ENCODE measurements at regions of chr3 and their contacts with region 1.

Region 1: GRCh38 chr3:101849721-101850245 is 469 bp downstream of the NFKBIZ start:
- DNase-seq: peak; percentile 88
- H3K4me3 Mint-ChIP-seq: peak overlapping the region; percentile 97
- H3K27ac Mint-ChIP-seq: peak overlapping the region; percentile 100
- H3K4me1 Mint-ChIP-seq: peaks cover 53% of the 10 kb centered on the region
- H3K27me3 Mint-ChIP-seq: no peaks in the 10 kb centered on the region

Region 2: DNA sequence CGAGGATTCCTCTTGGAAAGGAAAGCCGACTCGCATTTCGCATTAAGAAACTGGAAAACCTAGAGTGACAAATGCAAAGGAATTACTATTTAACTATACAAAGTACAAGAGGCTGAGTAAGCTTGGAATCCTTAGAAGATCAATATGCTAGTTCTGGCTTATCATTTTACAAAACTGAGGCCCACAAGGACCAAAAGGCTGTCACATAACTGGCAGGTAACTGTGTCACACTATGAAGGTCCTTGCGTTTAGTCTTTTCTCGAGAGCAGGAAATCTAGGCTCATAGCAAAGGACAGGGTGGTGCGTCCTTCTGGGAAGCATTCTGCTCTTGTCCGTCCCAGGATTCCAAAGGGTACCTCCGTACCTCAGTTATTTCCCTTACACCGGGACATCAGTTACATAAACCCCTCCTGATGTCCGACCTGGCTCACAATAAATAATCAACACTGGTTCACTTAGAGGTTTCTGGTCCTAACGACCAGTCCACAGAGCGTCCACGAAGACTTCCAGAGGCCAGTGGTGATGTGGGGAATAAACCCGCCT is 163.8 kb before region 1 on chr3:
- intact Hi-C with region 1: loop called (anchors 2 kb)
- DNase-seq: no peak
- H3K4me3 Mint-ChIP-seq: peak overlapping the region; percentile 98
- H3K27ac Mint-ChIP-seq: peak overlapping the region; percentile 98
- H3K4me1 Mint-ChIP-seq: peaks cover 24% of the 10 kb centered on the region
- H3K27me3 Mint-ChIP-seq: no peaks in the 10 kb centered on the region

Region 3: GRCh38 chr3:101803173-101803782 is 46.5 kb before region 1 on chr3:
- intact Hi-C with region 1: loop called (anchors 2 kb)
- DNase-seq: peak; percentile 90
- H3K4me3 Mint-ChIP-seq: no peak overlapping the region
- H3K27ac Mint-ChIP-seq: peak overlapping the region; percentile 26
- H3K4me1 Mint-ChIP-seq: peaks cover 16% of the 10 kb centered on the region
- H3K27me3 Mint-ChIP-seq: no peaks in the 10 kb centered on the region

Region 4: GRCh38 chr3:101861212-101861788 is 11.5 kb after region 1 on chr3:
- intact Hi-C with region 1: loop called (anchors 1 kb)
- DNase-seq: peak; percentile 25
- H3K4me3 Mint-ChIP-seq: no peak overlapping the region
- H3K27ac Mint-ChIP-seq: peak overlapping the region; percentile 59
- H3K4me1 Mint-ChIP-seq: peaks cover 30% of the 10 kb centered on the region
- H3K27me3 Mint-ChIP-seq: no peaks in the 10 kb centered on the region

Region 5: GRCh38 chr3:101988591-101988990 is 138.8 kb after region 1 on chr3:
- intact Hi-C with region 1: loop called (anchors 1 kb)
- DNase-seq: peak; percentile 70
- H3K4me3 Mint-ChIP-seq: peak overlapping the region; percentile 31
- H3K27ac Mint-ChIP-seq: peak overlapping the region; percentile 73
- H3K4me1 Mint-ChIP-seq: peaks cover 39% of the 10 kb centered on the region
- H3K27me3 Mint-ChIP-seq: peaks cover 21% of the 10 kb centered on the region

Region 6: GRCh38 chr3:102163036-102163827 is 313.4 kb after region 1 on chr3:
- intact Hi-C with region 1: loop called (anchors 5 kb)
- DNase-seq: no peak
- H3K4me3 Mint-ChIP-seq: no peak overlapping the region
- H3K27ac Mint-ChIP-seq: peak overlapping the region; percentile 0
- H3K4me1 Mint-ChIP-seq: peaks cover 14% of the 10 kb centered on the region
- H3K27me3 Mint-ChIP-seq: no peaks in the 10 kb centered on the region

Measured in activated CD4-positive, alpha-beta T cell treated with anti-CD3 and anti-CD28 coated beads, Interleukin-2, amount 10 ng/mL, durations not matched to agents 24 days and 14 days (primary cell).